MCF 10A (cell line): ENCODE measurements at regions of chr1 and their contacts with region 1.

Region 1: DNA sequence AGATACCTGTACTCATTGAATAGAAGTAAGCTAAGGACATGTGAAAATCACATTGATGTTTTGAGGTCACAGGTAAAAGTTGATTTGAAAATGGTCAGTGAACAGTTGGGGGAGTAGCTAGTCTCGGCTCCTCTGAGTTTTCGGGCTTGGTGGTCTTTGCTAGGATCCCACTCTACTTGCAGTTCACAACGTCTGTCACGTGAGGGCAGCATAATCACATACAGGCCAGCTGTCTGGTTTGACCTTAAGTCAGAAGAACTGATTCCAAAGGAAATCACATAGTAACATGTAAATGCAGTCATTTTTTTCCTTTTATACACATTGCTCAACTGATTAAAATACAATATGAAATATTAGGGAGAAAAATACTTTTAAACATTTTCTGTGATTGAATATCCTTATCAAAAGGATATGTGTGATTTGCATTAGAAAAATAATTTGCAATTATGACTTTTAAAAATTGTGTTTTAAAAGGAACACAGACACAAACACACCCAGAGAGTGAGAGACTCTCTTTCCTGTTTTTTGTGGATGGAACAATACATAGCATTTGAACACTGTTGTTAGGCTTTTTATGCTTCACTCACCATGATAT is 21.8 kb upstream of the PDC start:
- DNase-seq: peak; percentile 80
- H3K4me3 Mint-ChIP-seq: no peak overlapping the region
- H3K27ac Mint-ChIP-seq: no peak overlapping the region
- H3K4me1 Mint-ChIP-seq: peaks cover 7% of the 10 kb centered on the region
- H3K27me3 Mint-ChIP-seq: no peaks in the 10 kb centered on the region
- CTCF ChIP-seq: peak; percentile 99

Region 2: GRCh38 chr1:186404454-186405051 is 78.2 kb before region 1 on chr1:
- CTCF ChIA-PET with region 1: interaction called, 3 read pairs
- POLR2A ChIA-PET with region 1: no interaction called
- intact Hi-C with region 1: loop called (anchors 5 kb)
- DNase-seq: peak; percentile 71
- H3K4me3 Mint-ChIP-seq: no peak overlapping the region
- H3K27ac Mint-ChIP-seq: no peak overlapping the region
- H3K4me1 Mint-ChIP-seq: no peaks in the 10 kb centered on the region
- H3K27me3 Mint-ChIP-seq: no peaks in the 10 kb centered on the region
- CTCF ChIP-seq: peak; percentile 78

Region 3: GRCh38 chr1:186498695-186499389 is 16.1 kb after region 1 on chr1:
- CTCF ChIA-PET with region 1: interaction called, 10 read pairs
- POLR2A ChIA-PET with region 1: no interaction called
- intact Hi-C with region 1: no loop called
- DNase-seq: peak; percentile 20
- H3K4me3 Mint-ChIP-seq: no peak overlapping the region
- H3K27ac Mint-ChIP-seq: no peak overlapping the region
- H3K4me1 Mint-ChIP-seq: peaks cover 38% of the 10 kb centered on the region
- H3K27me3 Mint-ChIP-seq: no peaks in the 10 kb centered on the region
- CTCF ChIP-seq: no peak

Region 4: DNA sequence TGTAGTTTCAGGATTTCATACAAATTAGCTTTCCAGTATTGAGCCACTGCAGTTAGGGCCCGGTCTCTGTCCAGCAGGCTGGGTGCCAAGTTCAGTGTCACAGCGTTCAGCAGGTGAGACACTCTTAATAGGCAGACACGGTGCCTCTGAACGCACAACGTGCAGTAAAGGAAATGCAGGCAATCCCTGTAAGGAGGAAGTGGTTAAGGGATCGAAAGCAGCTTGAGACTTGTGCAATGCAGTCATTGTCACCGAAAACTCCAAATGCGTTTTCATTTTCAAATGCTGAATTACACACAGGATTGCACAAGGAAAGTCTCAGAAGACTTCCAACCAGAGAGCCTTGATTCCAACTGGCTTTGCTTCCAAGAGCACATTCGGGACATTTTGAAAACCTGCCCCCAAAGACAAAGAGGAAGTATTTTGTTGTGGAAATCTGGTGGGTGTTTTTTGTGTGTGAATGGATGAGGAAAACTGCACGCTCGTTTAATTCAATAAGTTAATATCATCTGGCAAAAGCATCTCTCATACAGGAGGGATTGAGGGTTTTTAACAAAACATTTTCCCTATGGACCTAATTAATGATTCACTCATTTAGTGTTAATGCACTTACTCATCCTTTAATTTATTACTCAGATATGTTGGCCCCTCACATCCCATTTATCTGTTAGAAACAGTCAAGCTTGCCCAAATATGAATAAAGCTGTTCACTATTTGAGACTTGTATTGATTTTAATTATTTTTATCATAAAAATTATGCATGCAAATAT is 135.8 kb after region 1 on chr1:
- CTCF ChIA-PET with region 1: no interaction called
- POLR2A ChIA-PET with region 1: no interaction called
- intact Hi-C with region 1: no loop called
- DNase-seq: peak; percentile 74
- H3K4me3 Mint-ChIP-seq: peak overlapping the region; percentile 56
- H3K27ac Mint-ChIP-seq: peak overlapping the region; percentile 46
- H3K4me1 Mint-ChIP-seq: peaks cover 15% of the 10 kb centered on the region
- H3K27me3 Mint-ChIP-seq: no peaks in the 10 kb centered on the region
- CTCF ChIP-seq: no peak

Region 5: GRCh38 chr1:186915555-186915954 is 432.8 kb after region 1 on chr1:
- CTCF ChIA-PET with region 1: interaction called, 5 read pairs
- POLR2A ChIA-PET with region 1: no interaction called
- intact Hi-C with region 1: loop called (anchors 2 kb)
- DNase-seq: no peak
- H3K4me3 Mint-ChIP-seq: no peak overlapping the region
- H3K27ac Mint-ChIP-seq: no peak overlapping the region
- H3K4me1 Mint-ChIP-seq: peaks cover 5% of the 10 kb centered on the region
- H3K27me3 Mint-ChIP-seq: no peaks in the 10 kb centered on the region
- CTCF ChIP-seq: no peak